H1 (cell line): ENCODE measurements at regions of chr16 and their contacts with region 1.

Region 1: GRCh38 chr16:73565262-73565661 is 517.3 kb upstream of the ZFHX3 start:
- DNase-seq: no peak
- H3K4me3 ChIP-seq: no peak overlapping the region
- H3K27ac ChIP-seq: no peak overlapping the region
- H3K4me1 ChIP-seq: peaks cover 0 to 8% (median under 1%) of the 10 kb centered on the region in 4 experiments; a peak in 2 of 7 replicates
- H3K27me3 ChIP-seq: no peaks in the 10 kb centered on the region; a peak in 1 of 7 replicates
- CTCF ChIP-seq: peak in 2 of 3 experiments; percentile 42 to 45; a peak in 2 of 4 replicates
- EP300 ChIP-seq: no peak
- POLR2A ChIP-seq: no peak
- RAD21 ChIP-seq: peak; percentile 76 to 84

Region 2: DNA sequence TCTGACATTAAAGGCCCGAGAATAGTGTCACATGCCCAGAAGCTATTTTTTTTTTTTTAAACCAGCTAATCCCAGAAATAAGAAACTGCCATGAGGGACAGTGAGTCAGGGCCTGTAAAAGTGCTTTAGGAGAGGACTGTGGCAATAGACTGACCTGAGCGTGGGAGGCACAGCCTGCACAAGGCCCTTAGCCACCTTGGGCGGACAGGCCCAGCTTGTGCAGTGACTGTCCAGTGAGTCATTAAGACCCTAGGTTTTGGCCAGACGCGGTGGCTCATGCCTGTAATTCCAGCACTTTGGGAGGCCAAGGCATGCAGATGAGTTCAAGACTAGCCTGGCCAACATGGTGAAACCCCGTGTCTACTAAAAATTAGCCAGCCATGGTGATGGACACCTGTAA is 174.3 kb before region 1 on chr16:
- CTCF ChIA-PET with region 1: no interaction called
- POLR2A ChIA-PET with region 1: no interaction called
- DNase-seq: no peak
- H3K4me3 ChIP-seq: no peak overlapping the region
- H3K27ac ChIP-seq: no peak overlapping the region
- H3K4me1 ChIP-seq: no peaks in the 10 kb centered on the region; a peak in 1 of 7 replicates
- H3K27me3 ChIP-seq: no peaks in the 10 kb centered on the region
- CTCF ChIP-seq: no peak
- EP300 ChIP-seq: no peak
- POLR2A ChIP-seq: no peak
- RAD21 ChIP-seq: no peak

Region 3: GRCh38 chr16:73670836-73671820 is 105.9 kb after region 1 on chr16:
- CTCF ChIA-PET with region 1: no interaction called
- POLR2A ChIA-PET with region 1: no interaction called
- DNase-seq: no peak
- H3K4me3 ChIP-seq: peak overlapping the region in 1 of 4 experiments; percentile 13; a peak in 1 of 8 replicates
- H3K27ac ChIP-seq: no peak overlapping the region
- H3K4me1 ChIP-seq: peaks cover 0 to 7% (median 4%) of the 10 kb centered on the region in 4 experiments; a peak in 3 of 7 replicates
- H3K27me3 ChIP-seq: no peaks in the 10 kb centered on the region
- CTCF ChIP-seq: no peak
- EP300 ChIP-seq: no peak
- POLR2A ChIP-seq: no peak
- RAD21 ChIP-seq: no peak

Region 4: DNA sequence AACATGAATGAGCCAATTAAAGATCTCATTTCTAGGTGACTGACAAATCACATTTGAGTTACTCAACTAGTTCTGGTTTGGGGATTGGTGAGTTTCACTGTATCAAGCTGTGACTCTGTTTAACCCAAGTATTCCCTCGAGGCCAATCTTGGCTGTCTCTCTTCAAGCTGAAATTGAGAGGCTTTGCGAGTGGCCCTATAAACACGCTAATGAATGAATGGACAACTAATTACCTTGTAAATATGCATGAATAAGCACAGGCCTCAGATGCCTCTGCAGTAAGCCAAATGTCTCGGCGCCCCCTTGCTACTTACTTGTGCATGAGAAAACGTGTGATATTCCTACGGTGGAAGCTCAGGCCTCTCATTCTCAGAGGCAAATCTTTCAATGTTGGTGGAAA is 281.1 kb after region 1 on chr16:
- CTCF ChIA-PET with region 1: interaction called, 10 read pairs
- POLR2A ChIA-PET with region 1: no interaction called
- DNase-seq: peak in 1 of 2 experiments; percentile 47
- H3K4me3 ChIP-seq: no peak overlapping the region
- H3K27ac ChIP-seq: no peak overlapping the region
- H3K4me1 ChIP-seq: no peaks in the 10 kb centered on the region
- H3K27me3 ChIP-seq: no peaks in the 10 kb centered on the region
- CTCF ChIP-seq: peak; percentile 35 to 62 (median 44)
- EP300 ChIP-seq: no peak
- POLR2A ChIP-seq: no peak
- RAD21 ChIP-seq: peak; percentile 63 to 68